Caco-2 (cell line): ENCODE measurements at regions of chr15 and their contacts with region 1.

Region 1: GRCh38 chr15:73704869-73705645 is 20.9 kb downstream of the CD276 start:
- DNase-seq: peak; percentile 74 to 75
- H3K4me3 ChIP-seq: no peak overlapping the region
- H3K4me3 Mint-ChIP-seq: no peak overlapping the region
- H3K27ac Mint-ChIP-seq: no peak overlapping the region
- H3K4me1 ChIP-seq: no peaks in the 10 kb centered on the region
- H3K4me1 Mint-ChIP-seq: no peaks in the 10 kb centered on the region
- H3K27me3 ChIP-seq: no peaks in the 10 kb centered on the region
- H3K27me3 Mint-ChIP-seq: no peaks in the 10 kb centered on the region
- CTCF ChIP-seq: peak; percentile 76 to 88

Region 2: GRCh38 chr15:73305331-73306211 is 399.5 kb before region 1 on chr15:
- CTCF ChIA-PET with region 1: interaction called, 4 read pairs
- POLR2A ChIA-PET with region 1: no interaction called
- intact Hi-C with region 1: loop called (anchors 2 kb)
- DNase-seq: peak; percentile 65 to 67
- H3K4me3 ChIP-seq: no peak overlapping the region
- H3K4me3 Mint-ChIP-seq: no peak overlapping the region
- H3K27ac Mint-ChIP-seq: no peak overlapping the region
- H3K4me1 ChIP-seq: no peaks in the 10 kb centered on the region
- H3K4me1 Mint-ChIP-seq: no peaks in the 10 kb centered on the region
- H3K27me3 ChIP-seq: no peaks in the 10 kb centered on the region
- H3K27me3 Mint-ChIP-seq: no peaks in the 10 kb centered on the region
- CTCF ChIP-seq: peak; percentile 74 to 77

Region 3: DNA sequence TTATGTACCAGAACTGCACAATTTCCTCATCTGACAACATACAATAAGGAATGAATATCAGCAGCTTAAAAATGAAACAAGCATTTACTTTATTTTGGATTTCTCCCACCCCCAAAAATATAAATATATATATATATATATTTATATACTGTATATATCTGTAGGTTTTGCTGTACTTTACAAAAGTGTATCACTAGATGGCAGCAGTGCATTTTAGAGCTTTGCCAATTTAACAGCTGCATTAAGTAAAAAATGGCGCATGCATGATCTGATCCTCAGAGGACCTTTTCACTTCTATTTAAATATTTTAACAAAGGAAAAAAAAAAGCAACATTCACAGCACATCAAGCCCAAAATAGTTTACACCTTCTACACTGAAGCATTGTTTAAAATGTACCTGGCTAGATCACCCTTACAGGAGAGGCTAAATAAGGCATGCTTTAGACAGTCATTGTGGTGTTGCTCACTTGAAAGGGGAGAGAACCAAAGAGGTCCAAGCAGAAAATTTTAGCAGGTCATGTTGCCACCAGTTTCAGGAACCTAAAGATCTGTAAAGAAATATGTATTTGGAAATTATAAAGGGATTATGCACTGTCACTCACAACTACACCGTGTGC is 144.4 kb before region 1 on chr15:
- CTCF ChIA-PET with region 1: interaction called, 10 read pairs
- POLR2A ChIA-PET with region 1: no interaction called
- intact Hi-C with region 1: loop called (anchors 1 kb)
- DNase-seq: peak in 1 of 2 experiments; percentile 42
- H3K4me3 ChIP-seq: no peak overlapping the region
- H3K4me3 Mint-ChIP-seq: no peak overlapping the region
- H3K27ac Mint-ChIP-seq: no peak overlapping the region
- H3K4me1 ChIP-seq: no peaks in the 10 kb centered on the region
- H3K4me1 Mint-ChIP-seq: no peaks in the 10 kb centered on the region
- H3K27me3 ChIP-seq: no peaks in the 10 kb centered on the region
- H3K27me3 Mint-ChIP-seq: no peaks in the 10 kb centered on the region
- CTCF ChIP-seq: peak; percentile 45 to 50

Region 4: GRCh38 chr15:73624530-73624929 is 80.5 kb before region 1 on chr15:
- CTCF ChIA-PET with region 1: no interaction called
- POLR2A ChIA-PET with region 1: no interaction called
- intact Hi-C with region 1: no loop called
- DNase-seq: no peak
- H3K4me3 ChIP-seq: no peak overlapping the region
- H3K4me3 Mint-ChIP-seq: no peak overlapping the region
- H3K27ac Mint-ChIP-seq: no peak overlapping the region
- H3K4me1 ChIP-seq: peaks cover 3% of the 10 kb centered on the region; the same call in 1 of the 2 replicates
- H3K4me1 Mint-ChIP-seq: peaks cover 11% of the 10 kb centered on the region
- H3K27me3 ChIP-seq: no peaks in the 10 kb centered on the region
- H3K27me3 Mint-ChIP-seq: no peaks in the 10 kb centered on the region
- CTCF ChIP-seq: no peak

Region 5: GRCh38 chr15:73677146-73677607 is 27.9 kb before region 1 on chr15:
- CTCF ChIA-PET with region 1: interaction called, 20 read pairs
- POLR2A ChIA-PET with region 1: no interaction called
- intact Hi-C with region 1: loop called (anchors 1 kb)
- DNase-seq: peak; percentile 69 to 75
- H3K4me3 ChIP-seq: no peak overlapping the region
- H3K4me3 Mint-ChIP-seq: no peak overlapping the region
- H3K27ac Mint-ChIP-seq: no peak overlapping the region
- H3K4me1 ChIP-seq: no peaks in the 10 kb centered on the region
- H3K4me1 Mint-ChIP-seq: no peaks in the 10 kb centered on the region
- H3K27me3 ChIP-seq: no peaks in the 10 kb centered on the region
- H3K27me3 Mint-ChIP-seq: peaks cover 8% of the 10 kb centered on the region
- CTCF ChIP-seq: peak; percentile 80 to 81

Region 6: GRCh38 chr15:73683777-73684580 is 21.1 kb before region 1 on chr15 and contains the start of gene CD276:
- CTCF ChIA-PET with region 1: interaction called, 14 read pairs
- POLR2A ChIA-PET with region 1: no interaction called
- intact Hi-C with region 1: loop called (anchors 1 kb)
- DNase-seq: peak; percentile 79 to 84
- H3K4me3 ChIP-seq: peak within 1 kb of the TSS; percentile 88
- H3K4me3 Mint-ChIP-seq: peak within 1 kb of the TSS; percentile 84
- H3K27ac Mint-ChIP-seq: peak within 1 kb of the TSS; percentile 71
- H3K4me1 ChIP-seq: peaks cover 13% of the 10 kb centered on the region
- H3K4me1 Mint-ChIP-seq: peaks cover 24% of the 10 kb centered on the region
- H3K27me3 ChIP-seq: no peaks in the 10 kb centered on the region
- H3K27me3 Mint-ChIP-seq: no peaks in the 10 kb centered on the region
- CTCF ChIP-seq: peak in 1 of 2 experiments; percentile 79
- total RNA-seq, gene CD276: 70.5 and 74.2 TPM in 2 replicates